B cell (primary cell): ENCODE measurements at regions of chr6 and their contacts with region 1.

Region 1: DNA sequence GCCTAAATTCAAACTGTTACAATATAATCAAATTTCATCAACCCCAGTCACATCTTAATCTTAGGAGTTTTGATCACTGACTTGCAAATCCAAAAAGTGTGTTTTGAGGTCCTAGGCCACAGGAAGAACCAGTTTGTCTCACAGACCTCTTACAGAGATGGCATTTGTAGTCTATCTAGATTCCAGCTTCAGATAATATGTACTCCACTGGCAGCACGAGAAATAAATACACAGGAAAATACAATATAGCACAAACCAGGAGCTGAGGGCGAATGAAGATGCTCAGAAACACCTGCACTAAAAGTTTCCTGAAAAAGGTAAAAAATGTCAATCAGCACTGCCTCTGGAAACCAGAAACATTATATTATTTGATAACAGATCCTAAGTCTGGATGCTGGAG is 647 bp upstream of the BTN3A3 start:
- DNase-seq: peak; percentile 49
- ATAC-seq: no peak
- H3K4me3 ChIP-seq: peak overlapping the region; percentile 76 to 100 (median 87)
- H3K4me3 Mint-ChIP-seq: peak overlapping the region; percentile 98
- H3K27ac ChIP-seq: peak overlapping the region; percentile 94 to 96
- H3K27ac Mint-ChIP-seq: peak overlapping the region; percentile 90
- H3K4me1 ChIP-seq: peaks cover 19 to 31% of the 10 kb centered on the region in 2 donors
- H3K4me1 Mint-ChIP-seq: peaks cover 38% of the 10 kb centered on the region
- H3K27me3 ChIP-seq: no peaks in the 10 kb centered on the region
- H3K27me3 Mint-ChIP-seq: no peaks in the 10 kb centered on the region
- CTCF ChIP-seq: no peak

Region 2: GRCh38 chr6:26175428-26176181 is 264.1 kb before region 1 on chr6:
- CTCF ChIA-PET with region 1: no interaction called
- POLR2A ChIA-PET with region 1: no interaction called
- intact Hi-C with region 1: no loop called
- DNase-seq: peak; percentile 81
- ATAC-seq: no peak
- H3K4me3 ChIP-seq: no peak overlapping the region
- H3K4me3 Mint-ChIP-seq: peak overlapping the region; percentile 21
- H3K27ac ChIP-seq: no peak overlapping the region
- H3K27ac Mint-ChIP-seq: peak overlapping the region; percentile 85
- H3K4me1 ChIP-seq: peaks cover 21 to 26% of the 10 kb centered on the region in 2 donors
- H3K4me1 Mint-ChIP-seq: peaks cover 29% of the 10 kb centered on the region
- H3K27me3 ChIP-seq: no peaks in the 10 kb centered on the region
- H3K27me3 Mint-ChIP-seq: no peaks in the 10 kb centered on the region
- CTCF ChIP-seq: peak; percentile 93

Region 3: DNA sequence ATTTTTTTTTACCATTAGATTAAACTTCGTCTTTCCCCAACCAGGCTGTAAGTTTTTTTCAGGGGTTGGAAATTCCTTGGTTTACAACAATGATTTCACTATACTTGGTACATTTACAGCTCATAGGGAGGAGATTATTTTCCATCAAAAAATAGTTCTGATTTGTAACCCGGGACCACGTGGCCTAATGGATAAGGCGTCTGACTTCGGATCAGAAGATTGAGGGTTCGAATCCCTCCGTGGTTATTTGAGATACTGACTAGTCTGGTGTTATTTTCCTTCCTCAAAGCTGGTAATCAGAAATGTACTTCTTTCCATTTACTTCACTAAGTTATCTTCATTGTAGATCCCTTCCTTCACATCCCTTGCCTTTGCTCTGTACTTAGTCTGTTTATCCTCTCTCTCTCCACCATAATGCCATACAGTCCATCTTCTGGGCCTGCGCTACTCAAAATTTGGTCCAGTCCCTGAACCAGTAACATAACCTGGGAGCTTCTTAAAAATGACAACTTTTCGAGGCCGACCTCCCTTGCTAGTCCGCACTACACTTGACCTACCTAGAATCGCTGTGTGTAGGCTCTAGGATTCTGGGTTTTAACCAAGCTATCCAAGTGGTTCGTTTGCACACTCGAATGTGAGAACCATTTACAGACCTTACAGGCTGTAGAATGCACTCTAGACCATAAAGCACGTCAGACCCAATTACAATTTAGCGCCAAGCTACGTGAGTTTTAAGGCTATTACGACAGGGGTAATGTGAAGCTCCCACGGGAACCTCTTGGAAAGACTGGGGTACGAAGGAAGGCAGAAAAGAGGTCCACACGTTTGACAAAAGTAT is 116.8 kb before region 1 on chr6:
- CTCF ChIA-PET with region 1: no interaction called
- POLR2A ChIA-PET with region 1: no interaction called
- intact Hi-C with region 1: no loop called
- DNase-seq: peak; percentile 83
- ATAC-seq: peak; percentile 59
- H3K4me3 ChIP-seq: peak overlapping the region in 4 of 5 experiments; percentile 49 to 74 (median 59)
- H3K4me3 Mint-ChIP-seq: peak overlapping the region; percentile 74
- H3K27ac ChIP-seq: no peak overlapping the region
- H3K27ac Mint-ChIP-seq: peak overlapping the region; percentile 70
- H3K4me1 ChIP-seq: peaks cover 14 to 31% of the 10 kb centered on the region in 2 donors
- H3K4me1 Mint-ChIP-seq: peaks cover 22% of the 10 kb centered on the region
- H3K27me3 ChIP-seq: peaks cover 0 to 43% (median 25%) of the 10 kb centered on the region in 4 experiments
- H3K27me3 Mint-ChIP-seq: peaks cover 26% of the 10 kb centered on the region
- CTCF ChIP-seq: no peak

Region 4: DNA sequence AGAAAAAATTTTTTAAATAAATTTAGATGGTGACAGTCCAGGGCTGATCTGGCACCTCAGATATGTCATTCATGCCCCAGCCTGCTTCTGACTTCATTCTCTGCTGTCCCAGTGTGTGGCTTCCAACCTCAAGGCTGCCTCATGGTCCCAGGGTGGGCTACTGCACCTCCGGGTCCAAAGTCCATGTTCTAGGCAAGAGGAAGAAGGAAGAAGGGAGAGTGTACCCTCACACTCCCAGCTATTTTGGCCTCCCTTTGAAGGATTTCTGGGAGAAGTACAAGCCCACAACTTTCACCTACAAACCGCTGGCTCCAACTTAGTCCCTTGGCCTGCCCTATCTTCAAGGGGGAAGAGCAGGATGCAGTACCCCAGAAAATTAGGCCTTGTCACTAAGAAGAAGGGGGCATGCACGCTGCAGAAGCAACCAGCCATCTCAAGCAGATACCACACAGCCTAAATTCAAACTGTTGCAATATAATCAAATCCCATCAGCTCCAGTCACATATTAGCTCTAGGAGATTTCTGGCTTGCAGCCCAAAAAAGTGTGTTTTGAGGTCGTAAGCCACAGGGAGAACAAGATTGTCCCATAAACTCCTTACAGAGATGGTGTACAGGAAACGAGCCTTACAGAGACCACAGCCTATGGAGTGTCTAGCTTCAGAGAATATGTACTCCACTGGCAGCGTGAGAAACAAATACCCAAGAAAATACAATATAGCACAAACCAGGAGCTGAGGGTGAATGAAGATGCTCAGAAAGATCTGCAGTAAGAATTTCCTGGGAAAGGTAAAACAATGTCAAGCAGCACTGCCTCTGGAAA is 75.6 kb before region 1 on chr6:
- CTCF ChIA-PET with region 1: no interaction called
- POLR2A ChIA-PET with region 1: no interaction called
- intact Hi-C with region 1: loop called (anchors 1 kb)
- DNase-seq: peak; percentile 61
- ATAC-seq: no peak
- H3K4me3 ChIP-seq: peak overlapping the region; percentile 69 to 99 (median 71)
- H3K4me3 Mint-ChIP-seq: no peak overlapping the region
- H3K27ac ChIP-seq: peak overlapping the region; percentile 84 to 90
- H3K27ac Mint-ChIP-seq: no peak overlapping the region
- H3K4me1 ChIP-seq: peaks cover 35 to 46% of the 10 kb centered on the region in 2 donors
- H3K4me1 Mint-ChIP-seq: peaks cover 40% of the 10 kb centered on the region
- H3K27me3 ChIP-seq: peaks cover 0 to 12% (median 4%) of the 10 kb centered on the region in 4 experiments
- H3K27me3 Mint-ChIP-seq: peaks cover 9% of the 10 kb centered on the region
- CTCF ChIP-seq: no peak

Region 5: GRCh38 chr6:26401987-26402658 is 37.5 kb before region 1 on chr6 and contains the start of gene BTN3A1:
- CTCF ChIA-PET with region 1: no interaction called
- POLR2A ChIA-PET with region 1: no interaction called
- intact Hi-C with region 1: loop called (anchors 1 kb)
- DNase-seq: peak; percentile 86
- ATAC-seq: peak; percentile 87
- H3K4me3 ChIP-seq: peak within 1 kb of the TSS; percentile 51 to 98 (median 94)
- H3K4me3 Mint-ChIP-seq: peak within 1 kb of the TSS; percentile 98
- H3K27ac ChIP-seq: peak within 1 kb of the TSS; percentile 64 to 84
- H3K27ac Mint-ChIP-seq: peak within 1 kb of the TSS; percentile 97
- H3K4me1 ChIP-seq: peaks cover 43 to 53% of the 10 kb centered on the region in 2 donors
- H3K4me1 Mint-ChIP-seq: peaks cover 63% of the 10 kb centered on the region
- H3K27me3 ChIP-seq: no peaks in the 10 kb centered on the region
- H3K27me3 Mint-ChIP-seq: no peaks in the 10 kb centered on the region
- CTCF ChIP-seq: no peak
- total RNA-seq, gene BTN3A1: 173 and 175 TPM in 2 replicates

Region 6: GRCh38 chr6:26457806-26458688 is 18.4 kb after region 1 on chr6 and contains the start of gene BTN2A1:
- CTCF ChIA-PET with region 1: no interaction called
- POLR2A ChIA-PET with region 1: no interaction called
- intact Hi-C with region 1: loop called (anchors 1 kb)
- DNase-seq: peak; percentile 89
- ATAC-seq: peak; percentile 96
- H3K4me3 ChIP-seq: peak within 1 kb of the TSS; percentile 75 to 96 (median 92)
- H3K4me3 Mint-ChIP-seq: peak within 1 kb of the TSS; percentile 100
- H3K27ac ChIP-seq: peak within 1 kb of the TSS; percentile 77 to 89
- H3K27ac Mint-ChIP-seq: peak within 1 kb of the TSS; percentile 98
- H3K4me1 ChIP-seq: peaks cover 30 to 47% of the 10 kb centered on the region in 2 donors
- H3K4me1 Mint-ChIP-seq: peaks cover 72% of the 10 kb centered on the region
- H3K27me3 ChIP-seq: no peaks in the 10 kb centered on the region
- H3K27me3 Mint-ChIP-seq: no peaks in the 10 kb centered on the region
- CTCF ChIP-seq: no peak
- total RNA-seq, gene BTN2A1: 63.3 and 69.6 TPM in 2 replicates

Region 7: DNA sequence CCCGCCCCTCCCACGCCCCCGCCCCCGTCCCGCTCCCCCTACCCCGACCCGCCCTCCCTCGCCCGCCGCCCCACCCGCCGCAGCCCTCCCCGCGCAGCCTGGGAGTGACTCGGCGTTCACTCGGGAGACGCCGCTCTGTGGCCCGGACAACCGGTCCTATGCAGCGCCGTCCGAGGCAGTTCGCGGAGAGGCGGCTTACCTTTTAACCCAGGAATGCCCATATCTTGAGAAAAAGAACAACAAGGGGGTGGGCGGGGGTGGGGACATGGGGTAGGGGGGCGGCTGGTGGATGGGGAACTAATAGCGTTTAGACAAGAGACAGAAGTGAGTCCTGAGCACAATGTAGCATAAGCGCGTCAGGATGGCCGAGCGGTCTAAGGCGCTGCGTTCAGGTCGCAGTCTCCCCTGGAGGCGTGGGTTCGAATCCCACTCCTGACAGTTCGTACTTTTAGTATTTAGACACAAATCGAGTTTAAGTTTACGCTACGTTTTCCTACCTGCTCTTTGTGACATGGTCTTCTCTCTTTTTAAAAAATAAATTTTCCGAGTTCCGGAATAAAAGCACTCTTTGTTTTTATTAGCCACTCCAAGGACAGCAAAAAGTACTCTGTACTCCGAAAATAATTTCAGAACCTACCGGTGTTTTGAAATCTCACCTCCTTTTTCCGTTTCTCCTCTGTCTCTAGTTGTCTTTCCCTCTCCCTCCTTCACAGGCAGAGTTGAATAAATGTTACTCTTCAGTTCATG is 81.4 kb after region 1 on chr6:
- CTCF ChIA-PET with region 1: no interaction called
- POLR2A ChIA-PET with region 1: no interaction called
- intact Hi-C with region 1: loop called (anchors 1 kb)
- DNase-seq: peak; percentile 94
- ATAC-seq: peak; percentile 64
- H3K4me3 ChIP-seq: peak overlapping the region; percentile 60 to 95 (median 74)
- H3K4me3 Mint-ChIP-seq: peak overlapping the region; percentile 84
- H3K27ac ChIP-seq: peak overlapping the region; percentile 85 to 94
- H3K27ac Mint-ChIP-seq: peak overlapping the region; percentile 91
- H3K4me1 ChIP-seq: peaks cover 17 to 20% of the 10 kb centered on the region in 2 donors
- H3K4me1 Mint-ChIP-seq: peaks cover 33% of the 10 kb centered on the region
- H3K27me3 ChIP-seq: no peaks in the 10 kb centered on the region
- H3K27me3 Mint-ChIP-seq: no peaks in the 10 kb centered on the region
- CTCF ChIP-seq: no peak